Ascending aorta (tissue), 2 donors: ENCODE measurements at regions of chr2 and their contacts with region 1.

Region 1: GRCh38 chr2:62705007-62705829 is at the start of gene EHBP1:
- DNase-seq: peak; percentile 95 to 99
- H3K4me3 ChIP-seq: peak within 1 kb of the TSS; percentile 84 to 86
- H3K27ac ChIP-seq: peak within 1 kb of the TSS; percentile 91
- H3K4me1 ChIP-seq: peaks cover 4 to 20% of the 10 kb centered on the region in 2 donors
- H3K27me3 ChIP-seq: no peaks in the 10 kb centered on the region
- CTCF ChIP-seq: no peak
- total RNA-seq, gene EHBP1: 19.9 TPM

Region 2: DNA sequence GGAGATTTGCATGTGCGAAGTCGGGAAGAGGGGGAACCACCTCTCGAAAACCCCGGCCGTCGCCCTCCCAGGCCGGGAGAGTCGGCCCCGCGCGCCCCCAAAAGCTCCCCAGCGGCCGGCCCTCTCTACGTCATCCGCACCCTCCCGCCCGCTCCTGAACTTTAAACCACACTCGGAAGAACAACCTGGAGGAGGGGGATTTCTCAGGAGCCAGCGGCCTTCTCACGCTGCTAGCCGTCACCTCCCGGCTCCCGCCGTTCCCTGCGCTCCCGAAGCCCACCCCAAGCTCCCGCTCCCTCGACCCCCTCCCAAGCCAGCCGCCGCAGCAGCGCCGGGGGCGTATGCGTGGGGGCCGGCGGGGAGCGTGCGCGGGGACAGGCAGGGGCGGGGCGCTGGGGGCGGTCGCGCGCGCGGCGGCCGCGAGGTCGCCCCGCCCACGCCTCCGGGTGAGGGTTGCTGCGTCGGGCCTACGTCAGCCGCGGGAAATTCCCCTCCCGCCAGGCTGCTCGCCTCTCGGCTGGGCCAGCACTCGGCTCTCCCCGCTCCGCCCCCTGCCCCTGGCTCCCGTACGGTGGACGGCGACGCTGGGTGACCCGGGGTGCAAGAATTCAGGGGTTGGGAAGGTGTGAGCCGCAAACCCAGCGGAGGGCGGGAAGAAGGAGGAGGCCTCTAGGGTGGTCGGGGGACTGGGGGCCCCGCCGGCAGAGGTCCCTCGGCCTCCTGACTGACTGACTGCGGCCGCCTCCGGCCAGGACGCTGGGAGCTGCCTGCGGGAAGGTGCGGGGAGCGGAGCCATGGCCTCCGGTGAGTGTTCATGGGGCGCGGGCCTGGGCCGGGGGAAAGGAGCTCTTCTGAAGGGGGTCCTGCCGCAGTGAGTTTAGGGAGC is 1823.9 kb before region 1 on chr2 and contains the start of gene REL:
- intact Hi-C with region 1: loop called (anchors 5 kb)
- DNase-seq: peak; percentile 51 to 92
- H3K4me3 ChIP-seq: peak within 1 kb of the TSS; percentile 85 to 93
- H3K27ac ChIP-seq: peak within 1 kb of the TSS; percentile 91 to 95
- H3K4me1 ChIP-seq: peaks cover 0 to 6% of the 10 kb centered on the region in 2 donors
- H3K27me3 ChIP-seq: no peaks in the 10 kb centered on the region
- CTCF ChIP-seq: no peak
- total RNA-seq, gene REL: 5.3 TPM

Region 3: GRCh38 chr2:61694312-61695274 is 1010.6 kb before region 1 on chr2:
- intact Hi-C with region 1: loop called (anchors 5 kb)
- DNase-seq: peak; percentile 66 to 96
- H3K4me3 ChIP-seq: peak overlapping the region; percentile 63 to 71
- H3K27ac ChIP-seq: peak overlapping the region; percentile 61 to 67
- H3K4me1 ChIP-seq: no peaks in the 10 kb centered on the region
- H3K27me3 ChIP-seq: no peaks in the 10 kb centered on the region
- CTCF ChIP-seq: peak; percentile 23 to 62 (median 33)

Region 4: DNA sequence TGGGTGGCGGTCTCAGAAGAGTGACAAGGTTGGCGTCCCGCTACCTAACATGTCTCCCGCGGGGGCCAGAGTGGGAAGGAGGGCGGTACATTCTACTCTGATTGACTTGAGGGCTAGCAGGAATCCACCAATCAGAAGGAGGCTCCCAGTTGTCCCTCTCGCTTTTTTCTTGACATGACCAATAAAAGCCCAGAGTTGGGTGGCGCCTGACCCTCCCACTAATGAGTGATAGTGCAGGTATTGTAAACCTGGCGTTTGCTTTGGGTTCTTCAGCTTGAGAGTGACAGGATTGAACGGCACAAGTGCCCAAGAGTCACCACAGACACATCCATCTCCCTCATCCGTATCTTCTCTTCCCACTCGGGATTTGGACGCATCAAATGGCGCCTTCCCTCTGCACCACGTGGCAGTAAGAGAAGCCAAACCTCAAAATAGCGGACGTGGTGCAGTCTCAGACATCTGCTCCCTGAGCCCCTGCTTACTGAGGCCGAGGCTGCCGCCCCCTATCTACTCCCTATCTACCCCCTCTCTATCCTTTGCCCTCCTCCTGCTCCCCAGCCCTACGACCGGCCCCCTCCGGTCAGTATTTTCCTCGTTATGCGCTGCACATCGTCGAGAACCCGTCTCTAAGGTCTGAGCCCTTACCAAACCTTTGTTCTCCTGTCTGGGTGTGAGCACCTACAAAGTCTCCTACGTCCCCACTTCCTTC is 850.6 kb before region 1 on chr2:
- intact Hi-C with region 1: loop called (anchors 1 kb)
- DNase-seq: peak; percentile 76 to 94
- H3K4me3 ChIP-seq: peak overlapping the region; percentile 76 to 94
- H3K27ac ChIP-seq: peak overlapping the region; percentile 93 to 95
- H3K4me1 ChIP-seq: peaks cover 0 to 4% of the 10 kb centered on the region in 2 donors
- H3K27me3 ChIP-seq: no peaks in the 10 kb centered on the region
- CTCF ChIP-seq: no peak

Region 5: DNA sequence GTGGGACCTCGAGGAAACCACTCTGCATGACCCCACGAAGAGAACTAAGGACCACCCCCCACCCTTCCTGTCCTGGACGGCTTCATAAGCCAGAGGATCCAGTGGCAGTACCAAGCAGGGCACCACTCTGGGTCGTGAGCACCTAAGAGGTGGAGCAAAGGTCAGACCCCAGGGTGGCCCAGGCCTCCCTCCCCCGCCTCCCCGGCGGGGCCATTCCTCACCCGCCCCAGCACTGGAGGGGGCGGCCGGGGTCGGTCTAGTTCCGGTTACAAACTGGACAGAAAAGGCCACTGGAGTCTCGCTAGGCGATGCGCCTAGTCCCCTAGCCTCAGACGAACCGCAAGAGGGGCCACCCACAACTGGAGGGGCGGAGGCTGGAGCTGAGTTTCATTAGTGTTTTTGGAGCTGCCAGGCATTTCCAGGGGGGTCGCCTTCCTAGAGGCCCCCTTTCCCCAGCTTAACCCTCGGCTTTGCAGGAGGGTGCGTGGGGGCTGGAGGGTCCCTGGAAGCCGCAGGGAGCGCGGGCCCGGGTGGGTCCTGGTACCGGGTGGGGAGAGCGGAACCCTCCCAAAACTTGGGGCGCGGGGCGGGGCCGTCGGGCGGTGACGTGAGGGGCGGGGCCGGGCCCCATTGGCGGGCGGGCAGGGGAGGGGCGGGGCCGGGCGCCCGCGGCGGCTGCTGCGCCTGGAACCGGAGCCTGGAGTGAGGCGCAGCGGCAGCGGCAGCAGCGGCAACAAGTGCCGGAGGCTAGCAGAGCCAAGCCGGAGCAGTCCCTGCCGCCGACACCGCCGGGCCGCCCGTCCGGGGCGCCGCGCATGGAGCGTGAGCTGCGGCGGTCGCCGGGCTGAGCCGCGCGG is 509.6 kb before region 1 on chr2 and contains the start of gene B3GNT2:
- intact Hi-C with region 1: loop called (anchors 10 kb)
- DNase-seq: peak in 1 of 2 donors; percentile 88
- H3K4me3 ChIP-seq: peak within 1 kb of the TSS; percentile 90 to 97
- H3K27ac ChIP-seq: peak within 1 kb of the TSS; percentile 90 to 91
- H3K4me1 ChIP-seq: peaks cover 0 to 21% of the 10 kb centered on the region in 2 donors
- H3K27me3 ChIP-seq: no peaks in the 10 kb centered on the region
- CTCF ChIP-seq: no peak
- total RNA-seq, gene B3GNT2: 15.2 TPM

Region 6: GRCh38 chr2:62443886-62444285 is 261.3 kb before region 1 on chr2:
- intact Hi-C with region 1: no loop called
- DNase-seq: peak in 1 of 2 donors; percentile 35
- H3K4me3 ChIP-seq: no peak overlapping the region
- H3K27ac ChIP-seq: no peak overlapping the region
- H3K4me1 ChIP-seq: no peaks in the 10 kb centered on the region
- H3K27me3 ChIP-seq: no peaks in the 10 kb centered on the region
- CTCF ChIP-seq: no peak

Region 7: GRCh38 chr2:62505750-62506420 is 199.3 kb before region 1 on chr2 and contains the start of gene TMEM17:
- intact Hi-C with region 1: loop called (anchors 1 kb)
- DNase-seq: peak; percentile 69 to 94
- H3K4me3 ChIP-seq: peak within 1 kb of the TSS; percentile 67 to 74
- H3K27ac ChIP-seq: peak within 1 kb of the TSS; percentile 85 to 88
- H3K4me1 ChIP-seq: peaks cover 0 to 2% of the 10 kb centered on the region in 2 donors
- H3K27me3 ChIP-seq: no peaks in the 10 kb centered on the region
- CTCF ChIP-seq: no peak
- total RNA-seq, gene TMEM17: not detected

Region 8: GRCh38 chr2:63588385-63589147 is 883.3 kb after region 1 on chr2 and contains the starts of genes MDH1 and WDPCP:
- intact Hi-C with region 1: loop called (anchors 2 kb)
- DNase-seq: peak; percentile 90 to 97
- H3K4me3 ChIP-seq: peak within 1 kb of the TSS; percentile 66 to 83
- H3K27ac ChIP-seq: peak within 1 kb of the TSS; percentile 88
- H3K4me1 ChIP-seq: peaks cover 5 to 16% of the 10 kb centered on the region in 2 donors
- H3K27me3 ChIP-seq: no peaks in the 10 kb centered on the region
- CTCF ChIP-seq: no peak
- total RNA-seq, gene MDH1: 65.7 TPM
- total RNA-seq, gene WDPCP: 5.2 TPM